ENCODE measurements at regions of chr20 and their contacts with region 1.

Region 1: DNA sequence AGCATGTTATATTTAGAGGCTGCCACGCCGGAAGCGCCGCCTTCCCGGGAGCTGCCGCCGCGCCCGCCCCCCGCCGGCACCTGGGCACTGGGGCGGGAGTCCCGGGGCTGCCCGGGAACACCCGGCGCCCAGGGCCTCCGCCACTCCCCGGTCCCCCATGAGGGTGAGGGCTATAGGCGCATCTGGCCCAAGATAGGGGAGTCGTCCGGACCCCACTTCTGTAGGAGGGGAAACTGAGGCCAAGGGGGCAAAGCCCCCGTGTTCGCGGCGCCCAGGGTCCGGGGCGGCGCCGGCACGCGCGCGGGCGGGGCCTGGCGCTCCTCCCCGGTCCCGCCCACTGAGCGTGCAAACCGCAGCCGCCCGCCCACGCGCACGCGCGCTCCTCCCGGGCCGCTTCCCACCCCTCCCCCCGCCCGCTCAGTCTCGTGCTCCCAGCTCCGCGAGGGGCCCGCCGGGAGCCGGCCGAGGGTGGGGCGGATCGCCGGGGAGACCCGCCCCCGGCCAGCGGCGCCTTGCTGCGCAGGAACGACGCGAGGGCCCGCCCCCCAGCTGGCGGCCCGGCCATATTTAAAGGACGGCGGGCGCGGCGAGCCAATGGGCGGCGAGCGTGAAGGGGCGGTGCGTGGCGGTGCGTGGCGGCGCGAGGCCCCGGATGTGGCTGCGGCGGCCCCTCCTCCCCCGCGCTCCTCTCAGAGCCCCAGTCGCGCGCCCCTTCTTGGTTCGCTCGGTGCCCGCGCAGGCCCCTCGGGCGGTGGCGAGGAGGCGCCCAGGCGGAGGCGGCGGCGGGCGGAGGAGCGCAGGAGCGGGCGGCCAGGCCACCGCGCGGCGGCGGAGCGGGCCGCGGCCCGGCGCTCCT is at the start of gene LSM14B:
- DNase-seq: peak; percentile 98
- H3K4me3 Mint-ChIP-seq: peak within 1 kb of the TSS; percentile 88
- H3K27ac Mint-ChIP-seq: peak within 1 kb of the TSS; percentile 96
- H3K4me1 Mint-ChIP-seq: peaks cover 28% of the 10 kb centered on the region
- H3K27me3 Mint-ChIP-seq: no peaks in the 10 kb centered on the region
- total RNA-seq, gene LSM14B: 44.0 and 45.3 TPM in 2 replicates

Region 2: GRCh38 chr20:62065669-62066338 is 56.2 kb before region 1 on chr20 and contains the start of gene TAF4:
- intact Hi-C with region 1: loop called (anchors 1 kb)
- DNase-seq: peak; percentile 95
- H3K4me3 Mint-ChIP-seq: peak within 1 kb of the TSS; percentile 88
- H3K27ac Mint-ChIP-seq: peak within 1 kb of the TSS; percentile 89
- H3K4me1 Mint-ChIP-seq: peaks cover 30% of the 10 kb centered on the region
- H3K27me3 Mint-ChIP-seq: peaks cover 3% of the 10 kb centered on the region
- total RNA-seq, gene TAF4: 25.6 and 26.6 TPM in 2 replicates

Region 3: DNA sequence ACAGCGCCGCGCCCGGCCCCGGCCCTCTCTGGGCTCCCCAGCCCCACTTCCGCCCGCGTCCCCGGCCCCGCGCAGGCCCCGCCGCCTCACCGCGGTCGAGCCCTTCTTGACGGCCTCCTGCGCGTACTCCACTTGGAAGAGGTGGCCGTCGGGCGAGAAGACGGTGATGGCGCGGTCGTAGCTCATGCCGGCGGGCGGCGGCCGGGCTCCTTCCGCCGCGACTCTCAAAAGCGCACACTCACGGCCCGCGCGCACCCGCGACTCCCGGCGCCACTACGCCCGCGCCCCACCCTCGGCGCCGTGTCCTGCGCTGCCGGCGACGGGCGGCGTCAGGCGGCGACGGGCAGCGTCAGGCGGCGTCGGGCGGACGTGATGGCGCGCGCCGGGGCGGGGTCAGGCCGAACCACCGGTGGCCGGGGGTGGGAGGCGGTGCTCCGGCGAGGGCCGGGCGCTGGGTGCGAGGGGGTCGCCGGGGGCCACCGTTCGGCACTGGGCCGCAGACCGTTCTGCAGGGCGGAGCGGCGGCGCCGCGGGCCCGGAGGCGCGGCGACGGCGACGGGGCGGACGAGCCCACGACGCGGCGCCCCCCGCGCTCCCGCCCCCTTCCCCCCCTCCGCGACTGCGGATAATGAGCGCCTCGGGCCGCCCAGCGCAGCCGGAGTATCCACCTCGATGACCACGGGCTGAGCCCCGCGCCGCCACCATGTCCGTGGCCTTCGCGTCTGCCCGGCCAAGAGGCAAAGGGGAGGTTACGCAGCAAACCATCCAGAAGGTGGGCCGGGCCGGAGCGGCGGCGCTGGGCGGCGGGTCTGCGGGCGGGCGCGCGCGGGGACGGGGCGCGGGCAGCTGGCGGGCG is 21.3 kb after region 1 on chr20 and contains the starts of genes PSMA7 and SS18L1:
- intact Hi-C with region 1: loop called (anchors 1 kb)
- DNase-seq: peak; percentile 96
- H3K4me3 Mint-ChIP-seq: peak within 1 kb of the TSS; percentile 94
- H3K27ac Mint-ChIP-seq: peak within 1 kb of the TSS; percentile 91
- H3K4me1 Mint-ChIP-seq: peaks cover 35% of the 10 kb centered on the region
- H3K27me3 Mint-ChIP-seq: no peaks in the 10 kb centered on the region
- total RNA-seq, gene PSMA7: 434 and 449 TPM in 2 replicates
- total RNA-seq, gene SS18L1: 26.7 and 29.0 TPM in 2 replicates

Region 4: GRCh38 chr20:62156592-62157386 is 34.8 kb after region 1 on chr20:
- intact Hi-C with region 1: loop called (anchors 1 kb)
- DNase-seq: peak; percentile 92
- H3K4me3 Mint-ChIP-seq: no peak overlapping the region
- H3K27ac Mint-ChIP-seq: no peak overlapping the region
- H3K4me1 Mint-ChIP-seq: peaks cover 14% of the 10 kb centered on the region
- H3K27me3 Mint-ChIP-seq: peaks cover 1% of the 10 kb centered on the region

Region 5: GRCh38 chr20:62182613-62183425 is 60.8 kb after region 1 on chr20 and contains the start of gene MTG2:
- intact Hi-C with region 1: loop called (anchors 1 kb)
- DNase-seq: peak; percentile 99
- H3K4me3 Mint-ChIP-seq: peak within 1 kb of the TSS; percentile 92
- H3K27ac Mint-ChIP-seq: peak within 1 kb of the TSS; percentile 95
- H3K4me1 Mint-ChIP-seq: peaks cover 25% of the 10 kb centered on the region
- H3K27me3 Mint-ChIP-seq: no peaks in the 10 kb centered on the region
- total RNA-seq, gene MTG2: 43.0 and 44.4 TPM in 2 replicates

Region 6: GRCh38 chr20:62237801-62238571 is 116.0 kb after region 1 on chr20 and contains the start of gene OSBPL2:
- intact Hi-C with region 1: loop called (anchors 1 kb)
- DNase-seq: peak; percentile 100
- H3K4me3 Mint-ChIP-seq: peak within 1 kb of the TSS; percentile 81
- H3K27ac Mint-ChIP-seq: peak within 1 kb of the TSS; percentile 78
- H3K4me1 Mint-ChIP-seq: peaks cover 26% of the 10 kb centered on the region
- H3K27me3 Mint-ChIP-seq: no peaks in the 10 kb centered on the region
- total RNA-seq, gene OSBPL2: 29.0 and 29.2 TPM in 2 replicates

Region 7: DNA sequence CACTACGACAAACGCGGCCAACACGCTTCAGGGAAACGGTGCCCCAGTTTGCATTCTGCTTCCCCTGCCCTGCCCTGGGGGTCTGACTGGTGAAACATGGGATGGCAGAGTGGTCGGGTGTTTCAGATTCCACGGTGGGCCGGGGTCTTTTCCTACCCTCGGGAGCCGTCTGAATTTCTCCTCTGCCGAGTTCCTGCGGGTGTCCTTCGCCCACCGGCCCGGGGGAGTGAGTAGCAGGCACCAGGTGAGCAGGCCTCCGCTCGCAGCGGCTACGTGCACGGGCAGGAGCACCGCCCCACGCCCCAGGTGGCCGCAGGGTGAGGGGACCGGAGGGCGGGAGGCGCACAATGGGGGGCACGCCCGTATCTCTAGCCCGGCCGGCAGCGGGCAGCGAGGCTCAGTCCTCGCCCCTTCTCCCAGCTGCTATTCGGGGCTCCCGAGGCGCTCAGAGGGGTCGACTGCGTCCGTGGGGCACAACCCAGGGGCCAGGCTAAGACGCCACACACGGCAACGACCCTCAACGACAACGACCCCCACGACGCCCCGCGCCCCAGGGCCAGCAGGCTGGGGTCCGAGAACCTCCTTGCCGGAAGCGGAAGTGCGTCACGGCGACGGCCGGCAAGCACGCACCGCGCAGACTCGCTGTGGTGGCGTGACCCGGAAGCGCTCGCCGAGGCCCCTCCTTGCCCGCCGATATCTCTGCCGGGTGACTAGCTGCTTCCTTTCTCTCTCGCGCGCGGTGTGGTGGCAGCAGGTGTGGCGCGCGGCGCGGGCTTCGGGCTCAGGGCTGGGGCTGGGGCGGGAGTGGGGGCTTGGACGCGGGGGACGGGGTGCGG is 264.6 kb after region 1 on chr20 and contains the start of gene RPS21:
- intact Hi-C with region 1: loop called (anchors 5 kb)
- DNase-seq: peak; percentile 98
- H3K4me3 Mint-ChIP-seq: peak within 1 kb of the TSS; percentile 98
- H3K27ac Mint-ChIP-seq: peak within 1 kb of the TSS; percentile 94
- H3K4me1 Mint-ChIP-seq: peaks cover 37% of the 10 kb centered on the region
- H3K27me3 Mint-ChIP-seq: no peaks in the 10 kb centered on the region
- total RNA-seq, gene RPS21: 2,091 and 2,109 TPM in 2 replicates

Measured in activated CD4-positive, alpha-beta T cell treated with anti-CD3 and anti-CD28 coated beads, Interleukin-2, amount 10 ng/mL, durations not matched to agents 24 days and 14 days (primary cell).